CD8-positive, alpha-beta T cell (primary cell): ENCODE measurements at regions of chr5 and their contacts with region 1.

Region 1: GRCh38 chr5:34474573-34475021 is 181.5 kb upstream of the RAI14 start:
- DNase-seq: peak in 2 of 9 experiments; percentile 48 to 57
- ATAC-seq: peak; percentile 62
- H3K4me3 ChIP-seq: no peak overlapping the region
- H3K4me3 Mint-ChIP-seq: no peak overlapping the region
- H3K27ac ChIP-seq: no peak overlapping the region
- H3K27ac Mint-ChIP-seq: no peak overlapping the region
- H3K4me1 ChIP-seq: no peaks in the 10 kb centered on the region
- H3K4me1 Mint-ChIP-seq: peaks cover 3% of the 10 kb centered on the region
- H3K27me3 ChIP-seq: no peaks in the 10 kb centered on the region
- H3K27me3 Mint-ChIP-seq: peaks cover 15% of the 10 kb centered on the region
- CTCF ChIP-seq: peak; percentile 97

Region 2: DNA sequence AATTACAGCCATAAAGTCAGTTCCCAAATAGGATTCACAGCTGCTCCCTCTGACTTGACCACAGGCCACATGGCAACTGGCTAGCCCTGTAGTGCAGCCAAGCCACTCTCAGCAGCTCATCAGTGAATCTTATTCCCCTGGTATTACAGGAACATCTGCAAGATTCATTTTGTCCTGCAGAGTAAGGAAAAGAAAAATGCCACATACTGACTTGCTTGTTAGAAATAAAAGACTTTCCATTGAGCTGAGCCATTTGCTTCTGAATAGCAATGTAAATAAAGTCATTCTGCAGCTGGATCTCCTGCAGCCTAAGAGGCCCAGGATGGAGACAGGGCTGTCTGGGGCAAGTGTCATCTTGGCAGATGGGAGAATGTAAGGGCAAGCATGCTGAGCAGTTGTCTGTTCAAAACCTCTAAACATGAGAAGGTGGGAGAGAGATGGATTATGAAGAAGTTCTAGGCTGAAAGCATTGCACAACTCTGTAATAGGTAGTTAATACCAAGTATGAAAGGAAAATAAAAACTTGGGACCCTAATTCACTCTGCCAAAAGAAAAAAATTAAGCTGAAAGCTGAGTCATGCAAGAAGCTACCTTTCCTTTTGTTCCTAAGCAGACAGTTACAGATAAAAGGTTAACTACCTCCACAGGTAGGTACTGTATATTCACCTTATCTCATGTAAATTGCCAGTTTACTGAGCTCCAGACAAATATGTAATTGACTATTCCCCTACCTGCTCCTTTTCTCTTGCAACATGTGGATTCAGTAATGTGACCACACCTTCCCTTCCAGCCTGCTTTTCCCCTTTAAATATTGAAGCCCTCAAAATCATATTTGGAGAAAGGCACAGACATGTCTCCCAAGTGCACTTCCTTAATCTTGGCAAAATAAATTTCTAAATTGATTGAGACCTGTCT is 62.9 kb before region 1 on chr5:
- CTCF ChIA-PET with region 1: no interaction called
- POLR2A ChIA-PET with region 1: no interaction called
- intact Hi-C with region 1: no loop called
- DNase-seq: no peak
- ATAC-seq: no peak
- H3K4me3 ChIP-seq: no peak overlapping the region
- H3K4me3 Mint-ChIP-seq: no peak overlapping the region
- H3K27ac ChIP-seq: no peak overlapping the region
- H3K27ac Mint-ChIP-seq: no peak overlapping the region
- H3K4me1 ChIP-seq: no peaks in the 10 kb centered on the region
- H3K4me1 Mint-ChIP-seq: no peaks in the 10 kb centered on the region
- H3K27me3 ChIP-seq: no peaks in the 10 kb centered on the region
- H3K27me3 Mint-ChIP-seq: peaks cover 10% of the 10 kb centered on the region
- CTCF ChIP-seq: no peak

Region 3: GRCh38 chr5:34898258-34898895 is 423.8 kb after region 1 on chr5:
- CTCF ChIA-PET with region 1: interaction called, 15 read pairs
- POLR2A ChIA-PET with region 1: no interaction called
- intact Hi-C with region 1: loop called in 1 of 2 experiments (anchors 1 kb)
- DNase-seq: peak; percentile 8 to 72 (median 60)
- ATAC-seq: peak; percentile 67
- H3K4me3 ChIP-seq: no peak overlapping the region
- H3K4me3 Mint-ChIP-seq: no peak overlapping the region
- H3K27ac ChIP-seq: no peak overlapping the region
- H3K27ac Mint-ChIP-seq: no peak overlapping the region
- H3K4me1 ChIP-seq: no peaks in the 10 kb centered on the region
- H3K4me1 Mint-ChIP-seq: no peaks in the 10 kb centered on the region
- H3K27me3 ChIP-seq: no peaks in the 10 kb centered on the region
- H3K27me3 Mint-ChIP-seq: no peaks in the 10 kb centered on the region
- CTCF ChIP-seq: peak; percentile 83

Region 4: DNA sequence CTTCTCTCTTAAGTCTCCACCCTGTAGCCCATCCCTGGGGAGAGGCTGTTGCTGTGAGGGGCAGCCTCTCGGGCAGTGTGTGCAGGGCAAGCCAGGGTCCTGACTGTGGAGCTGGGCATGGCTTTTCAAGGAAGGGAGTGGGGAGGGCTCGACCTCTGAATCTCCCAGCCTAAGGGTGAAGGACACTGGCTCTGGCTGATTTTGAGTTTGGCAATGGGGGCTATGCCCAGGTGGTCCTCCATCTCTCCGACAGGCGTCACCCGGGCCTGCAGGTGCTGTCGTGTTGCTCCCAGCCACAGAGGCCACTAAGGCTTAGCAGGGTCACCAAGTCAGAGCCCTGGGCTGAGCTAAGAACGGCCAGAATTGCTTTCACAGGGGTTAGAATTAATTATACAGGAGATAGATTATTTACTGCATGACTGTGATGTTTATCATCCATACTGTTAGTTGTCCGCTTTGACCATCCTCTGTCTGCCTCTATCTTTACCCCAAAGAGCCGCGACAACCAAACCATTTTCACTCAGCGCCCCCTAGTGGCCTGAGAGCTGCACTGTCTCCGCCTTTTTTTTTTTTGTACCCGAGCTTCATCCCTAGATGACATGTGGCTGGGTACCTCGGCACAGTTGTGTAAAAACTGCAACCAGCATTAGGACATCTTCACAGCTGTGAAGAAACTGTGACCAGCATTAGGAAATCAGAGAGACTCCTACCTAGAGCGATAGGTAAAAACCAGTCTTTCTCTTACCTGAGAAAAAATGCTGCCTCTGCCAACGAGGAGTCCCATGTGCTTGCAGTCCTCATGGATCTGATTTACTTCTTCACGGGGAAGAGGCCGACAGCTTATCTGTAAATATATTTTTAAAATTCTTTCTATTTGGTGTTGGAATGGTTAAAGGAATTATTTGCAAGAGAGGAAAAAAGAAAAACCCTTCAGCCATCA is 528.7 kb after region 1 on chr5:
- CTCF ChIA-PET with region 1: interaction called, 5 read pairs
- POLR2A ChIA-PET with region 1: no interaction called
- intact Hi-C with region 1: loop called in 1 of 2 experiments (anchors 1 kb)
- DNase-seq: peak in 8 of 9 experiments; percentile 4 to 68 (median 50)
- ATAC-seq: no peak
- H3K4me3 ChIP-seq: no peak overlapping the region
- H3K4me3 Mint-ChIP-seq: no peak overlapping the region
- H3K27ac ChIP-seq: no peak overlapping the region
- H3K27ac Mint-ChIP-seq: no peak overlapping the region
- H3K4me1 ChIP-seq: no peaks in the 10 kb centered on the region
- H3K4me1 Mint-ChIP-seq: no peaks in the 10 kb centered on the region
- H3K27me3 ChIP-seq: no peaks in the 10 kb centered on the region
- H3K27me3 Mint-ChIP-seq: peaks cover 33% of the 10 kb centered on the region
- CTCF ChIP-seq: peak; percentile 76

Region 5: GRCh38 chr5:35089334-35090314 is 615.0 kb after region 1 on chr5:
- CTCF ChIA-PET with region 1: no interaction called
- POLR2A ChIA-PET with region 1: no interaction called
- intact Hi-C with region 1: no loop called
- DNase-seq: peak; percentile 16 to 68 (median 57)
- ATAC-seq: no peak
- H3K4me3 ChIP-seq: no peak overlapping the region
- H3K4me3 Mint-ChIP-seq: no peak overlapping the region
- H3K27ac ChIP-seq: no peak overlapping the region
- H3K27ac Mint-ChIP-seq: no peak overlapping the region
- H3K4me1 ChIP-seq: no peaks in the 10 kb centered on the region
- H3K4me1 Mint-ChIP-seq: no peaks in the 10 kb centered on the region
- H3K27me3 ChIP-seq: no peaks in the 10 kb centered on the region
- H3K27me3 Mint-ChIP-seq: peaks cover 3% of the 10 kb centered on the region
- CTCF ChIP-seq: peak; percentile 68